ENCODE measurements at regions of chr18 and their contacts with region 1.

Region 1: DNA sequence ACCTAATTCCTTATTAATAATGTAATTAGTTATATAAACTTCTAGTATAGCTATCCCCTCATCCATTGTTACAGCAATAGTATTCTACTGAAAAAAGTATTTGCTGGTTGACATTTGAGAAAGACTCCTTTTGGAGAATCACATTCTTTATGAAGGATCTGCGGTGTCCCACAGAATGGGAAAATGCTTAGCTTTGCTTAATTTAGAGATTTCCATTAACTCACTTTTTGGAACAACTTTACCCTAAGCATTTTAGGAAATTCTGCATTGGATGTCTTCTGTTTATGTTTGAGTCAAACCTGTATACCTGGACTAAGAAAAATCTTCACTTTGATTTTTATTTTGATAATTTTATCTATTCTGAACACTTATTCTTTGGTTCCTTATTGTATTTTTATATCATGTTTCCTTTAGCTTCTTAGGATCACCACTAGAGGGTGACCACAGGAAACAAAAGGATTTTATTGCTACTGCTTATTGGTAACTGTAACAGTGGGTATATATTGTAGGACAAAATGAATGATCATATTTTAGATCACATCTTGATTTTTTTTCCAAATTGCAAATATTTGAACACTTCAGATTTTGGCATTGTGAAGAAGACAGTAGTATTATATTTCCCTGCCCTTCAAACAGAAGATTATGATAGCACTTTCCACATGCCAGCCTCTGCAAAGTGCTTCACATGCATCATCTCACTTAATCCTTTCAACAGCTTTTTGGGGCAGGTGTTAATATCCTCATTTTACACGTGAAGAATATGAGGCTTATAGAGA is 79.6 kb downstream of the MIB1 start:
- DNase-seq: no peak
- ATAC-seq: peak in 3 of 4 donors; percentile 23 to 49 (median 32)
- H3K4me3 ChIP-seq: no peak overlapping the region
- H3K27ac ChIP-seq: no peak overlapping the region
- H3K4me1 ChIP-seq: peaks cover 0 to 4% (median 0%) of the 10 kb centered on the region in 12 donors
- H3K27me3 ChIP-seq: no peaks in the 10 kb centered on the region
- CTCF ChIP-seq: peak; percentile 38 to 71 (median 58)
- POLR2A ChIP-seq: no peak

Region 2: DNA sequence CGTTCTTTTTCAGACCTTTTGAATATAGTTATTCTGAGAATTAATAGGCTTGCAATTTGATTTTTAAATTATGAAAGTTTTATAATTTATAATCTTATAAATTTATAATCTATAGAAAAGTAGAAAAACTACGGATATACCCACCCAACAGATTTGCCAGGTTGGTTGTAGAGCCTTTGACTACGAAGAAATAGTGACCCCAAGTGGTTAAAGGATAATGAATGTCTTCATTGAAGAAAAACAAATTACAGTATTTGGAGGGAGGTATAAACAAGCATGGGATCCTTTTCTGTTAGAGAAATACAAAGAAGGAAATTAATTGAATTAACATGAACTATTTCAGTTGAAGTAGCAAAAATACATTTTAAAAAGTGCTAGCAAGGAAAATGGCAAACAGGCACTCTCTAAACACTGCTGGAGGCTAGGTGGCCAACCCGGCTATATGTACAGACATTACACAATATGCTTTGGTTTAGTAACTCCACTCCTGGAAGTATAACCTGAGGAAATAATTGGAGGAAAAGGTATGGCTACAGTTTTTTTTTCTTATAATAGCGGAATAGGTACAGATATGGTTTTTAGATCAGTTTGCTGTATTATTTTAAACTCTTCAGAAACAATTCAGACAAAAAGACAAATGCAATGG is 31.2 kb after region 1 on chr18:
- intact Hi-C with region 1: loop called in 6 of 10 experiments (anchors 1 to 5 kb)
- DNase-seq: no peak
- ATAC-seq: peak in 2 of 4 donors; percentile 45 to 63
- H3K4me3 ChIP-seq: no peak overlapping the region
- H3K27ac ChIP-seq: no peak overlapping the region
- H3K4me1 ChIP-seq: peaks cover 0 to 15% (median 0%) of the 10 kb centered on the region in 12 donors
- H3K27me3 ChIP-seq: no peaks in the 10 kb centered on the region
- CTCF ChIP-seq: peak; percentile 25 to 66 (median 44)
- POLR2A ChIP-seq: no peak

Region 3: DNA sequence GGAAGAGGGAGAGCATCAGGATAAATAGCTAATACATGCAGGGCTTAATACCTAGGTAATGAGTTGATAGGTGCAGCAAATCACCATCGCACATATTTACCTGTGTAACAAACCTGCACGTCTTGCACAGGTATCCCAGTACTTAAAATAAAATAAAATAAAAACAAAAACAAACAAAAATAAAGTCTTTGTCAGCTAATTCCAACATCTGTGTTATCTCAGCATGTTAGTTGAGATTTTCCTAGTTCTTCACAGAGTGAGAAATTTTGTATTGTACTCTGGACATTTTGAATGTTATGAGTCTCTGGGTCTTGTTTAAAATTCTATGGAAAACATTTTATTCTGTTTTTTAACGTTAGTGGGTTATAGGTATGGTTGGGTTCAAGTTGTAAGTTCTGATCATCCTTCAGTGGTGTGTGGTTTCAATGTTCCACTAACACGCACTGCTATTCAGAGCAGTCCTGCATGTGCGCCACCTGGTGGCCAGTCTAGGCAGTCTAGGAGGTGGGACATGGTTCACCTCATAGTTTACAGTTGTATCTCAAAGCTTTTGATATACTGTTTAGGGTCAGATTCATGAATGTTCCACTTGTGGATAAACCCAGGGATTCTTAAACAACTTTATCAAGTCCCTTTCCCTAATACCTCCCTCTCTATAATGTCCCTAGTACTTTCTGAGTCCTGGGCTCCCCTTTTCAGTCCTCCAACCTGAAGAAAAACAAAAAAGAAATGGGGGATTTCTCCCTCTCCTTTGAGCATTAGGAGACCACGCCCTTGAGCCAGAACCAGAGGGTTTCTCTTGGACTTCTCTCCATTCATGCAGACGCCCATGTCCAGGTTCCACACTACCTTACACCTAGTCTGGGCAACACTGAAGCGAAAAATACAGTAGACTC is 135.8 kb after region 1 on chr18:
- intact Hi-C with region 1: loop called in 1 of 10 experiments (anchors 5 kb)
- DNase-seq: peak; percentile 67 to 90 (median 76)
- ATAC-seq: peak; percentile 71 to 94 (median 92)
- H3K4me3 ChIP-seq: no peak overlapping the region
- H3K27ac ChIP-seq: no peak overlapping the region
- H3K4me1 ChIP-seq: peaks cover 0 to 12% (median 0%) of the 10 kb centered on the region in 12 donors
- H3K27me3 ChIP-seq: peaks cover 0 to 3% (median 0%) of the 10 kb centered on the region in 9 donors
- CTCF ChIP-seq: peak; percentile 86 to 95 (median 90)
- POLR2A ChIP-seq: no peak

Measured in heart left ventricle (tissue), 16 donors.